Activated T-helper 2 cell treated with anti-CD3 and anti-CD28 coated beads, Interferon-gamma antibody, Interleukin-2, Interleukin-4, amounts not matched to agents 10 μg/mL and 5 μg/mL and 100 μg/mL, durations not matched to agents 14 hours and 24 hours and 36 hours (primary cell): ENCODE measurements at regions of chr17 and their contacts with region 1.

Region 1: DNA sequence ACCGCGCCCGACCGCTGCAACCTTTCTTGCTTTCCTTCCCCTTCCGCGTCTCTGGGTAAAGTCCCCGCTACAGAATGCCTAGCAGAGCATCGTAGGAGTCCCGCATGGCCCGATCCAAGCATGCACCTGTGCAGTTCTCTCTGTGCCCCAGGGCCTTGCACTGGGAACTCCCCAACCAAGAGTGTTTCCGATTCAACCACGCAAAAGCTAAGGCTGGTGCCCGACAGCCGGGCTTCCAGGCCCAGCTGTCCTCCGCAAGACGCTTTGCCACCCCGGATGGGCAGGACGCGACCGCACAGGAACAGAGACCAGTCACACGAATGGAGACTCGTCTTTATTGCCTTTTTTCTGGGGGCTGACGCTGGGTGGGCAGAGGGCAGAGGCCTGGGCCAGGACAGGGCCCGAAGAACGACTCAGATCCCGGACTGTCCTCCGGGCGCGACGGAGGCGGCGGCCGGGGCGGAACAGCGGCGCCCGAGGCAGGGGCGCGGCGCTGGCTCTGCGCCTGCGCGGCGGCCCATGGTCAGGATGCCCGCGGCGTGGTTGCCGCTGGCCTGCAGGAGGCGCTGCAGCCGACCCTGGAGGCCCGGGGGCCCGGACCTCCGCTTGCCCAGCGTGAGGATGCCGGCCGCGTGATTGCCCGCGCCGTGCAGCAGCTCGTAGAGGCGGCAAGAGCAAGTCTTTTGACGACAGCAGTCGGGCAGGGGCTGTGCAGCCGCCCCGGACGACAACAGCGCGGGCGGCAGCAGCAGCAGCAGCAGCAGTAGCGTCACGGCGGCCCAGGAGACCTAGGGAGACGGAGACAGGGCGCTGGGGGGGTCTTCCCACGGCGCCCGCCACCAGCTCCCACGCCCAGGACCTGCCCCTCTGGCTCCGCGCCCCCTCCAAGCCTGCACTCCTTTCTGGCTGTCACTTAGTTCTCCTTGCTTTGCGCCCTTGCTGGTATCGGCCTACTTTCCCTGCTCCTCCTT is 1.2 kb downstream of the HCRT start:
- DNase-seq: peak; percentile 77
- H3K4me3 Mint-ChIP-seq: peak overlapping the region; percentile 89
- H3K27ac Mint-ChIP-seq: peak overlapping the region; percentile 76
- H3K4me1 Mint-ChIP-seq: peaks cover 32% of the 10 kb centered on the region
- H3K27me3 Mint-ChIP-seq: peaks cover 23% of the 10 kb centered on the region

Region 2: GRCh38 chr17:42153919-42154742 is 29.9 kb before region 1 on chr17:
- intact Hi-C with region 1: loop called (anchors 2 kb)
- DNase-seq: no peak
- H3K4me3 Mint-ChIP-seq: peak overlapping the region; percentile 92
- H3K27ac Mint-ChIP-seq: peak overlapping the region; percentile 77
- H3K4me1 Mint-ChIP-seq: peaks cover 22% of the 10 kb centered on the region
- H3K27me3 Mint-ChIP-seq: no peaks in the 10 kb centered on the region

Region 3: GRCh38 chr17:42221937-42222745 is 38.1 kb after region 1 on chr17:
- intact Hi-C with region 1: no loop called
- DNase-seq: peak; percentile 38
- H3K4me3 Mint-ChIP-seq: no peak overlapping the region
- H3K27ac Mint-ChIP-seq: peak overlapping the region; percentile 22
- H3K4me1 Mint-ChIP-seq: peaks cover 4% of the 10 kb centered on the region
- H3K27me3 Mint-ChIP-seq: no peaks in the 10 kb centered on the region